Cardiac septum (tissue), 1 donor: ENCODE measurements at regions of chr7 and their contacts with region 1.

Region 1: DNA sequence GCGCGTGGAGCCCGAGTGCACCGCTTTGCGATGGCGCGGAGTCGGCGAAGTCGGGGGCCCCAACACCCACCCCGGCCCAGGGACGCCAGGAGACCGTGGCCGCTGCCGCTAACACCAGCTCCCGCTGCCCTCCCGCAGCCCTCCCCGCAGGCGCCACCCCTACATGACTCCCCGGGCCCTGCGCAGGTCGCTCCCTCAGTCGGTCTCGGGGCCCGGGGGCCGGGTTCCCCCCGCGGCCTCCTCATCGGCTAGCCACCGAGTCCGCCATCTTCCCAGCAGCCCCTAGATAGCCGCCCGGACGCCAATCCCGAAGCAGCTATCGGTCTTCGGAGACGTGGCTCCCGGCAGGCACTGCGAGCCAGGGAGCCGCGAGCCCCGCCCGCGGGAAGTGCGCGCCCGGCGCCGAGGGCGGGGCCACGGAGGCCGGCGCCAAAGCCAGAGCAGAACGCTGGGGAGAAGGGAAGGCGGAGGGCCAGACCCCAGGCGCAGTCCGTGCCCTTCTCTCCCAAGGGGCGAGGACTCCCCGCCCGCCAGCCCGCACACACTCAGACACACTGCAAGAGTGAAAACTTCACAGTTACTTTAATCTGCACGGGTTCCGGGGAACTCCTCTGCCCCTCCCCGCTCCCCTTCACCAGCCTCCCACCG is at the start of gene FASTK:
- DNase-seq: peak; percentile 97
- total RNA-seq, gene FASTK: 93.3 TPM

Region 2: DNA sequence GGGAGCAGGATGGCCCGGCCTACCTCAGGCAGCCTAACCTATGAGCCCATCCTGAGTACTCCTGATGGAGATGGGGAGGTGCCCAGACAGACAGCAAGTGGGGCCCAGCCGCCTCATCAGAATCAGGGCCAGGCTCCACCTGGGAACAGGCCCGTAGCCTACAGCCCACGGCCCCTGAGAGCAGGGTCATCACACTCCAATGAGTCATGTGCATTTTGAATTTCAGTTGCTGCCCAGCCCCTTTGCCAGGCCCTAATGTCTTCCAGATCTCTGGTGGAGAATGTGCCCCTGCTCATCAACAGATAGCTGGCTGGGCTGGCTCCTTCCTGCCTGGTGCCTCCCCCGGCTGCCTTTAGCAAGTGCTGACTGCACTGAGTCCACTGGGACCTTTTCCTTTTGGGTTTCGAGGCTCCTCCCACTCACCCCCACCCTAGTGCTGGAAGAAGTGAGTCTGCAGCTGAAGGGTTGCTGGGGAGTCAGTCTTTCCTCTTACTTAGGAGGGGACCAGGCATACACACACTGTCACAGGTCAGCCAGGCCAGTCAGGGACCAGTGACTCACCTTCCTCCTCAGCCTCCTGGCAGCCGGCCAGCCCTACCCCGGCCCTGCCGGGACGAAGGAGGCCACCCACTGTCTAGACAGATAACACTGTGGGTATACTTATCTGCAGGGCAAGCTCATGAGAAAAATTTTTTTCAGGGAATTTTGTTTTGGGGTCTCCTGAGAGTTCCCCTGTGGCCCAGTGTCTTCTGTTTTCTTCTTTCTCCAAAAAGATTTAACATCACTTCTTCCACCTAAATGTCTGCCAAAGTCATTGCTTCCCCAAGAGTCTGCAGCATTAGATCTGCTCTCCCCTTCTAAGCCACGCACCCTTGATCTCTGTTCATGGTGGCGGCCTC is 41.4 kb before region 1 on chr7:
- intact Hi-C with region 1: no loop called
- DNase-seq: peak; percentile 85

Region 3: GRCh38 chr7:151057989-151058780 is 22.5 kb before region 1 on chr7:
- intact Hi-C with region 1: loop called (anchors 1 kb)
- DNase-seq: peak; percentile 99